ENCODE measurements at regions of chr5 and their contacts with region 1.

Region 1: DNA sequence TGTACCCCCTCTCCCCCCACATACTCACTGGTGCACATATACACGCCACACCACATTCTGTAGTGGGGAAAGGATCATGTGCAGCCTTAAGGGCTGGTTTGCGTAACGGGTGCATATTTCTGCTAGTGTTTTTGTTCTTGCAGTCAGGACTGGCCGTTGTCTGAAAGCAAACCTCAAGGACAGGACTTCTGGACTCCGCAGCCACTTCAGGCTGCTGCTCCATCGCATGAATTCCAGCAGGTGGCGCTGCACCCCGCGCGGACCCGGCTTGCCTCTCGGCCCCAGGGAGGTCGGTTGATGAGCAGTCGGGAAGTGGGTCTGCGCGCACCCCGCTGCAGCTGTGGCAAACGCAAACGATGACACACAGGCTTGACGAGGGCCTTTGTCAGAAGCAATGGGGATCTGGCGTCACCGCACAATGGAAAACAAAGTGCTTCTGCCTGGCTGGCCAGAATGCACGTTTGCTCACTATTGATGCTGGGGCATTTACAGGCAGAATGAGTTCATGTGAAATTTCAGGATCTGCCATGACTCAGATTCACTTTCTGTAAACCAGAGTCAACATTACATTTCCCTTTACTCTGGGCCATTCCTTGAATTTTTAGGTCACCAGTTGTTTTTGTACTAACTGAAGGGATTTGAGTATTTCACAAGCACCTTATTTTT is 36.3 kb upstream of the GLRX start:
- DNase-seq: peak in 1 of 2 donors; percentile 99
- H3K4me3 ChIP-seq: peak overlapping the region; percentile 17 to 29
- H3K27ac ChIP-seq: peak overlapping the region; percentile 88
- H3K4me1 ChIP-seq: peaks cover 72% of the 10 kb centered on the region
- H3K27me3 ChIP-seq: no peaks in the 10 kb centered on the region
- CTCF ChIP-seq: peak; percentile 93 to 99 (median 99)
- POLR2A ChIP-seq: no peak

Region 2: GRCh38 chr5:95730730-95731570 is 127.8 kb before region 1 on chr5 and contains the start of gene RHOBTB3:
- intact Hi-C with region 1: loop called (anchors 10 kb)
- DNase-seq: peak in 1 of 2 donors; percentile 94
- H3K4me3 ChIP-seq: peak within 1 kb of the TSS; percentile 80 to 99
- H3K27ac ChIP-seq: peak within 1 kb of the TSS; percentile 89
- H3K4me1 ChIP-seq: peaks cover 27% of the 10 kb centered on the region
- H3K27me3 ChIP-seq: no peaks in the 10 kb centered on the region
- CTCF ChIP-seq: no peak
- POLR2A ChIP-seq: peak in 1 of 2 donors; percentile 68
- total RNA-seq, gene RHOBTB3: 43.2 TPM

Region 3: DNA sequence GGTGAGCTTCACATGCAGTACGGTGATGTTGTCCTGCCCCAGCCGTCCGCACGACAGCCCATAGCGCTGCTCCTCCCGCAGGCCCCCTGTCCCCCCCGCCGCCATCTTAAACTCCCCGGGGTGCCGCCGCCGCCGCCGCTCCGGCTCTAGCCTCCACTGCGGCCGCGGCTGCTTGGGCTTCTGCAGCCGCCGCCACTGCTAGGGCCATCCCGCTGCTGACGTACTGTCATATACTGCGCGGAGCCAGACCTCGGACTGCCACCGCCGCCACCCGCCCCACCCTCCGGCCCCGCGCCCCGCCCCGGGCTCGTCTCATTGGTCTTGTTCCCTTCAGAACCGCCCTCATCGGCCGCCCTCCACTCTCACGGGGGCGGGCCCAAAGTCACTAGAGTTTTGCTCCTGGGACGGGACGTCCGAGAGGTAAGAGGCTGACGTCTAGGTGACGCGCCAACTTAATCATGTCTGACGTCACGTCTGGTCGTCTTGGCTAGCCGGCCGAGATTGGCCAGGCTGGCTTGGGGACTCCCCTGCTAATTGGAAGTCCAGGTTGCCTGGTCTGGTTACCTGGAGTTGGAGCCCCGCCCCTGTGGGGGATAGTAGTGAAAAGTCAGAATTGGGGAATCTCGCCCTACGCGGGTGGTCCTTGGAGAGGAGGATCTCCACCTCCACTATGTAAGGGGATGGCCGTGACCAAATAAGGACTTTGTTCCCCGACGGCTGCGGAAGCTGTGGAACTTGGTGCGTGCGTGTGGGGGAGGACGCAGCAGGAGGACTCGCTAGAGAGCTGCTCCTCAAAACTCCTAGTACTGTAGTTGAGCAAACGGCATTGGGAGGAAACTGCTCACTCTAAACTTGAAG is 103.1 kb after region 1 on chr5 and contains the start of gene ELL2:
- intact Hi-C with region 1: loop called (anchors 2 kb)
- DNase-seq: peak; percentile 100
- H3K4me3 ChIP-seq: peak within 1 kb of the TSS; percentile 58 to 91
- H3K27ac ChIP-seq: peak within 1 kb of the TSS; percentile 99
- H3K4me1 ChIP-seq: peaks cover 29% of the 10 kb centered on the region
- H3K27me3 ChIP-seq: no peaks in the 10 kb centered on the region
- CTCF ChIP-seq: no peak
- POLR2A ChIP-seq: peak; percentile 54 to 95
- total RNA-seq, gene ELL2: 113 TPM

Region 4: GRCh38 chr5:96336351-96336985 is 477.7 kb after region 1 on chr5:
- intact Hi-C with region 1: loop called (anchors 5 kb)
- DNase-seq: no peak
- H3K4me3 ChIP-seq: no peak overlapping the region
- H3K27ac ChIP-seq: peak overlapping the region; percentile 57
- H3K4me1 ChIP-seq: peaks cover 12% of the 10 kb centered on the region
- H3K27me3 ChIP-seq: no peaks in the 10 kb centered on the region
- CTCF ChIP-seq: peak; percentile 73 to 89 (median 79)
- POLR2A ChIP-seq: no peak

Measured in vagina (tissue), 2 donors.